ENCODE measurements at regions of chr5 and their contacts with region 1.

Region 1: GRCh38 chr5:72166070-72166979 is 59.0 kb downstream of the MAP1B start:
- DNase-seq: peak; percentile 78
- H3K4me3 ChIP-seq: peak overlapping the region in 1 of 2 experiments; percentile 13; a peak in 1 of 4 replicates
- H3K27ac ChIP-seq: peak overlapping the region; percentile 83 to 100
- H3K4me1 ChIP-seq: peaks cover 52 to 55% of the 10 kb centered on the region in 2 experiments
- H3K27me3 ChIP-seq: no peaks in the 10 kb centered on the region
- CTCF ChIP-seq: no peak
- EP300 ChIP-seq: peak in 1 of 2 experiments; percentile 89; a peak in 2 of 4 replicates
- RAD21 ChIP-seq: peak; percentile 19

Region 2: GRCh38 chr5:72185496-72186329 is 19.4 kb after region 1 on chr5:
- CTCF ChIA-PET with region 1: interaction called, 10 read pairs
- POLR2A ChIA-PET with region 1: no interaction called
- DNase-seq: no peak
- H3K4me3 ChIP-seq: no peak overlapping the region
- H3K27ac ChIP-seq: peak overlapping the region; percentile 18 to 23; a peak in 3 of 4 replicates
- H3K4me1 ChIP-seq: peaks cover 5 to 34% of the 10 kb centered on the region in 2 experiments
- H3K27me3 ChIP-seq: no peaks in the 10 kb centered on the region
- CTCF ChIP-seq: no peak
- EP300 ChIP-seq: no peak
- RAD21 ChIP-seq: no peak

Region 3: GRCh38 chr5:72244862-72245371 is 78.6 kb after region 1 on chr5:
- CTCF ChIA-PET with region 1: interaction called, 11 read pairs
- POLR2A ChIA-PET with region 1: no interaction called
- DNase-seq: peak; percentile 43
- H3K4me3 ChIP-seq: no peak overlapping the region
- H3K27ac ChIP-seq: peak overlapping the region; percentile 91 to 99
- H3K4me1 ChIP-seq: peaks cover 16 to 50% of the 10 kb centered on the region in 2 experiments
- H3K27me3 ChIP-seq: no peaks in the 10 kb centered on the region
- CTCF ChIP-seq: peak; percentile 62
- EP300 ChIP-seq: no peak
- RAD21 ChIP-seq: peak; percentile 81